Endothelial cell of umbilical vein (primary cell): ENCODE measurements at regions of chr9 and their contacts with region 1.

Region 1: DNA sequence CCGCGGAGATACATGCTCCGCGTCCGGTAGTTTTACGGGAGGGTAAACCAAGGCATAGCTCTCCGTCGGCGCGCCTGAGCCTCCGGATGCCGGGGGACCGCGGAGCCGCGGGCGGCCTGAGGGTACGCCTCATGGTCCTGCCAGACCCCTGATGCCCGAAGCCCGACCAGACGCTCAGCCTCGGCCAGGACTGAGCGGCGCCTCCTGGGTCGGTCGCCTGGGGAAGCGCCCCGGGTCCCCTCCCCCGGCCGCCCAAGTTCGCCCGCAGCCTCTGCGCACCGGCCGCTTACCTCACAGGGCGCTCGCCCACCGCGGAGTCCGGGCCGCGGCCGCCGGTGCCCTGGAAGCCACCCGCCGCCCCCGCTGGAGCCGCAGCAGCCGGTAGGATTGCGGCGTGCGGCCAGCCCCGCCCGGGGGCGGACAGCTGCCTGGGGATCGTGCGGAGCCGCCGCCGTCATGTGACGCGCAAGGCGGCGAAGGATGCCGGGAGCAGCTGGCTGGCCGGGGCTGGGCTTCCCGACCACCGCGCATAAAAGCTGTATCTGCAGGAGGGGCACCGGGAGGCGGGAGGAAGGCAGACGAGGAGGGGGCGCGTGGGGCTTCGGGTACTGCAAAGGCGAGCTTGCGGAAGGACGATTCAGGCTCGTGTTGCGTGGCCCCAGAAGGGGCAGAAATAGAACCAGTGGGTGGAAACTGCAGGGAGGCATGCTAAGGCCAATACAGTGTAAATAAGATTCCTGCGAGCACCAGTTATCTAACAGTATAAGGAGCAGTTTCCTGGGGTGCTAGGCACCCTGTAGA is at the start of gene FBXO10:
- DNase-seq: peak; percentile 78
- H3K4me3 ChIP-seq: peak within 1 kb of the TSS; percentile 68 to 85 (median 70)
- H3K27ac ChIP-seq: peak within 1 kb of the TSS; percentile 45
- H3K4me1 ChIP-seq: peaks cover 21% of the 10 kb centered on the region
- H3K27me3 ChIP-seq: no peaks in the 10 kb centered on the region
- CTCF ChIP-seq: no peak
- POLR2A ChIP-seq: peak; percentile 70
- total RNA-seq, gene FBXO10: 13.8 and 14.4 TPM in 2 replicates

Region 2: DNA sequence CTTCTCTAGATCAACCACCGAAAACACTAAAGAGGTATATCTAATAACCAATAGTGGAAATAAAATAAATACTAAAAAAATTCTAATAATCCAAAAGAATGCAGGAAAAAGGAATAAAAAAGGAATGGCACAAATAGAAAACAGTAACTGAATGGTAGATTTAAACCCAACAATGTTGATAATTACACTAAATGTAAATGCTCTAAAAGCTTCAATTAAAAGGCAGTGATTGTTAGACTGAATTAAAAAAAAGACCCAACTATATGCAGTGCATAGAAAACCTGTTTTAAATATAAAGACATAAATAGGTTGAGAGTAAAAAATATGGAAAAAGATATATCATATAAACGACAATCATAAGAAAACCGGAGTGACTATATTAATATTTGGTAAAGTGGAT is 101.7 kb before region 1 on chr9:
- CTCF ChIA-PET with region 1: no interaction called
- POLR2A ChIA-PET with region 1: no interaction called
- dilution Hi-C with region 1: no loop called
- intact Hi-C with region 1: no loop called
- DNase-seq: no peak
- H3K4me3 ChIP-seq: no peak overlapping the region
- H3K27ac ChIP-seq: no peak overlapping the region
- H3K4me1 ChIP-seq: peaks cover 9% of the 10 kb centered on the region
- H3K27me3 ChIP-seq: peaks cover 5 to 9% of the 10 kb centered on the region in 2 experiments
- CTCF ChIP-seq: no peak
- POLR2A ChIP-seq: no peak

Region 3: DNA sequence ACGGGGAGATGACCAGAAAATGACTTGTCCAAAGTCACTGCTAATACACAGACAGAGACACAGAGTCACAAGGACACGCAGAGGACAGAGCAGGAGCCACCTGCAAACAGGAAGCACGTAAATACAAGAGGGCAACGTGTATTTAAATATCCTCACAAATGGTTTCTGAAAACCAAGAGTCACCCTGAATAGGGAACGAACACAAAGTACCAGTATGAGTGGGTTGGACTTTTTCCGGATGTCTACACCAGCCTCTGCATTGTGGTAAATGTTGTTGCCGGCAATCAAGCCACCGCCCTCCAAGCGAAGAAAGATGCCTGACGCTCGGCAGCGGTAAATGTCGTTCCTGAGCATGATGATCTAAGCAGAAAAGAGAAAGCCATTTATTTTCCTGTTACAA is 44.4 kb before region 1 on chr9:
- CTCF ChIA-PET with region 1: no interaction called
- POLR2A ChIA-PET with region 1: no interaction called
- dilution Hi-C with region 1: no loop called
- intact Hi-C with region 1: no loop called
- DNase-seq: no peak
- H3K4me3 ChIP-seq: no peak overlapping the region
- H3K27ac ChIP-seq: no peak overlapping the region
- H3K4me1 ChIP-seq: no peaks in the 10 kb centered on the region
- H3K27me3 ChIP-seq: no peaks in the 10 kb centered on the region
- CTCF ChIP-seq: no peak
- POLR2A ChIP-seq: no peak

Region 4: DNA sequence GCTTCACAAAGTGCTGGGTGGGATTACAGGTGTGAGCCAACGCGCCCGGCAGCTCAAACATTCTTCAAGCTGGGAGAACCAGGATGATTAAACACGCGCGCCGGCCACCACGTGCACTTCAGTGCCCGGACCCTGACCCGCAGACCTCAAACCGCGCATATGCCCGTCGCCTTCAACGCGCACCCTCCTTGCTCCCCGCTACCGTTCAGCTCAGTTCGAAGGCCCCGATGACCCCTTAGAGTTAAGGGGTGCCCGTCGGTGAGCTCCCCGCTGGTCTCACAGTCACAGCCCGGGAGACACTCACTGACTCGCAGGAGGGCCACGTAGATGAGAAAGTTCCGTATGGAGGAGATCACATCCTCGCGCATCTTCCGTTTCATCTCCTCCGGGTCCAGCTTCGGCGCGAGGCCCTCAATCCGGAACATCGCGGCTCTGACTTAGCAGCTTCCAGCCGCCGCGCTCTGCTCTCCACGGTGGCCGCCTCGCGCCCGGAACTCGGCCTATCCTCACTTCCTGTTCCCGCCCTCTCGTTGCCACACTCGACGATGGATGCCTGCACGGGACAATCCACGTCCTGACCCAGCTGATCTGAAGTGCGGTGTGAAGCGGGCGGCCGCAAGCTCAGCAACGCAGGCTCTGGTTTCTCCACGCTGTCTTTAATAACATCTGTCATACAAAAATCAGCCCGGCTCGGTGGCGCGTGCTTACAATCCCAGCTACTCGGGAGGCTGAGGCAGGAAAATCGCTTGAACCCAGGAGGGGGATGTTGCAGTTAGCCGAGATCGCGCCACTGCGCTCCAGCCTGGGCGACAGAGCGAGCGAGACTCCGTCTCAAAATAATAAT is 16.2 kb after region 1 on chr9 and contains the start of gene TOMM5:
- CTCF ChIA-PET with region 1: interaction called, 17 read pairs
- POLR2A ChIA-PET with region 1: interaction called, 8 read pairs
- dilution Hi-C with region 1: no loop called
- intact Hi-C with region 1: loop called (anchors 2 kb)
- DNase-seq: peak; percentile 93
- H3K4me3 ChIP-seq: peak within 1 kb of the TSS; percentile 86 to 95 (median 90)
- H3K27ac ChIP-seq: peak within 1 kb of the TSS; percentile 76
- H3K4me1 ChIP-seq: peaks cover 15% of the 10 kb centered on the region
- H3K27me3 ChIP-seq: peaks cover 8% of the 10 kb centered on the region in 2 experiments
- CTCF ChIP-seq: no peak
- POLR2A ChIP-seq: peak; percentile 96
- total RNA-seq, gene TOMM5: 145 and 147 TPM in 2 replicates